Activated T-helper 2 cell treated with anti-CD3 and anti-CD28 coated beads, Interferon-gamma antibody, Interleukin-2, Interleukin-4, amounts not matched to agents 10 μg/mL and 5 μg/mL and 100 μg/mL, durations not matched to agents 14 hours and 24 hours and 36 hours (primary cell): ENCODE measurements at regions of chr6 and their contacts with region 1.

Region 1: GRCh38 chr6:45645302-45645701 is 267.6 kb upstream of the SUPT3H start:
- DNase-seq: no peak
- H3K4me3 Mint-ChIP-seq: no peak overlapping the region
- H3K27ac Mint-ChIP-seq: peak overlapping the region; percentile 62
- H3K4me1 Mint-ChIP-seq: peaks cover 34% of the 10 kb centered on the region
- H3K27me3 Mint-ChIP-seq: no peaks in the 10 kb centered on the region

Region 2: DNA sequence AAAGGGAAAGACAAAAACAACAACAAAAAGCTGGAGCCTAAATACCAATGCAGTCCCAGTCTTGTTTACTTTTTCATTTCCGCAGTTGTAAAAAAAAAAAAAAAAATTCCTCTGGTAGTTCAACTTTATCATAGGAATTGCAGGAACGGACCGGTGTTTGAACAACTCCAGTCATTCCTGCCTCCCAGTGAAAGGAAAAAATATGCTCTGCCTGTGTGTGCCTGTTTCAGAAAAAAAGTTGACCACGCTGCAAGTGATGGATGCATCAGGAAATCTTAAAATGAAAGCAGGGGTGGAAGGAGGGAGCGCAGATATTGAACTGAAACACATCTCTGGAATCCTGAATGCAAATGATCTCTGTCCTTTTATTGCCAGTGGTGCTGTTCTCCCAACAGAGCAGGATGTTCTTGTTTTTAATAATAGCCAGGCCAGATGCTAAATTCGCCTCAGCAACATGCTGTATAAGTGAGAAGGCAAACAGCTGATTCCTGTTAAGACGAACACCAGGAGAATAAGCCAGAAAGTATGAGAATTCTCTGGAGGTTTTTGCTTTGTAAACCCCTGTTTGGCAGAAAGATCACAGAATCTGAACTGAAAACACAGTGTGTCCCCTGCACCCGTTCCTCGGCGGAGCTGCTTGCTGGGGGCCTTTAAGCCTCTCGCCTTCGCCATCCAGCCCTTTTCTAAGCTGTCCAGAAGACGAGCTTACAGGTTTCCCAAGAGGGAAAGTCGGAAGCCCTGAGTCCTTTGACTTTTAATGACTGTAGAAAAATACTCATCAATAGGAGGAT is 89.1 kb before region 1 on chr6:
- intact Hi-C with region 1: no loop called
- DNase-seq: no peak
- H3K4me3 Mint-ChIP-seq: no peak overlapping the region
- H3K27ac Mint-ChIP-seq: no peak overlapping the region
- H3K4me1 Mint-ChIP-seq: peaks cover 69% of the 10 kb centered on the region
- H3K27me3 Mint-ChIP-seq: no peaks in the 10 kb centered on the region

Region 3: GRCh38 chr6:45631395-45631794 is 13.9 kb before region 1 on chr6:
- intact Hi-C with region 1: loop called (anchors 2 kb)
- DNase-seq: no peak
- H3K4me3 Mint-ChIP-seq: no peak overlapping the region
- H3K27ac Mint-ChIP-seq: no peak overlapping the region
- H3K4me1 Mint-ChIP-seq: peaks cover 49% of the 10 kb centered on the region
- H3K27me3 Mint-ChIP-seq: no peaks in the 10 kb centered on the region